ENCODE measurements at regions of chr17 and their contacts with region 1.

Region 1: GRCh38 chr17:73156166-73156840 is 8.5 kb upstream of the SSTR2 start:
- DNase-seq: peak; percentile 36 to 77
- ATAC-seq: peak; percentile 92

Region 2: DNA sequence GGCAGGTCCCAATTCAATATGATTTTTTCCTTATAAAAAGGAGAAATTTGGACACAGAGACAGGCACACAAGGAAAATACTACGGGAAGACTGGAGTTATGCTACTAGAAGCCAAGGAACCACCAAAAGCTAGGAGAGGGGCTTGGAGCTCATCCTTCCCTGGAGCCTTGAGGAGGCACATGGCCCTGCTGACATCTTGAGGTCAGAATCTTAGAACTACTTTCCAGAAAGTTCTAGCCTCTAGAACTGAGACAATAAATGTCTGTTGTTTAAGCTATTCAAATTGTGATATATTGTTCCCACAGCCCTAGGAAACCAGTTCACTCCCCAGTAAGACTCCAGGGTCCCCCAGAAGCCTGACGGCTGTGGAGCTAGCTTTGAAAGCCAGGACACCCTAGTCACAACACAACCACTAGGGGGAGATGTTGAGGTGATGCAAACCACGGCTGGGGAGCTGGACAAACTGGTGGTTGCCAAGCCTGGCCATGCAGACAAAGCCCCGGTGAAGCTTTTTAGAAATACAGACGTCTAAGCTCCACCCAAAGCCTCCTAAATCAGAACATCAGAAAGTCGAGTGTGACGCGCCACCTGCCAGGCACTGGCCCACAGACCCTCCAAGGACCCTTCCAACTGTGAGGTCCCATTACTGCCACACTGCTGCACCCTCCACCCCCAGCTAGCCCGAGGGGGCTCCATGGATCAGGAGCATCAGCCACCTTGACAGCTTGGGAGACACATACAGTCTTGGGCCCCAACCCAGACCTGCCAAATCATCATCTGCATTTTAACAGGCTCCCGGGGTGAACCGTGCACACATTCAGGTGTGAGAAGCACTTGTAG is 170.2 kb before region 1 on chr17:
- intact Hi-C with region 1: loop called in 1 of 2 experiments (anchors 5 kb)
- DNase-seq: peak in 1 of 2 donors; percentile 51
- ATAC-seq: peak; percentile 94